ENCODE measurements at regions of chr10 and their contacts with region 1.

Region 1: GRCh38 chr10:24209946-24210491 is 1.1 kb downstream of the KIAA1217 start:
- DNase-seq: no peak
- ATAC-seq: no peak
- H3K4me3 ChIP-seq: no peak overlapping the region
- H3K4me3 Mint-ChIP-seq: peak overlapping the region in 1 of 3 donors; percentile 40
- H3K27ac ChIP-seq: no peak overlapping the region
- H3K27ac Mint-ChIP-seq: no peak overlapping the region
- H3K4me1 ChIP-seq: peaks cover 0 to 3% of the 10 kb centered on the region in 2 experiments
- H3K4me1 Mint-ChIP-seq: peaks cover 14 to 20% (median 15%) of the 10 kb centered on the region in 3 donors
- H3K27me3 ChIP-seq: peaks cover 0 to 22% of the 10 kb centered on the region in 2 experiments
- H3K27me3 Mint-ChIP-seq: peaks cover 33 to 48% of the 10 kb centered on the region in 2 donors

Region 2: GRCh38 chr10:24174014-24174413 is 36.0 kb before region 1 on chr10:
- CTCF ChIA-PET with region 1: interaction called in 1 of 2 experiments, 14 read pairs
- POLR2A ChIA-PET with region 1: no interaction called
- DNase-seq: no peak
- ATAC-seq: no peak
- H3K4me3 ChIP-seq: no peak overlapping the region
- H3K4me3 Mint-ChIP-seq: no peak overlapping the region
- H3K27ac ChIP-seq: no peak overlapping the region
- H3K27ac Mint-ChIP-seq: no peak overlapping the region
- H3K4me1 ChIP-seq: no peaks in the 10 kb centered on the region
- H3K4me1 Mint-ChIP-seq: no peaks in the 10 kb centered on the region
- H3K27me3 ChIP-seq: no peaks in the 10 kb centered on the region
- H3K27me3 Mint-ChIP-seq: no peaks in the 10 kb centered on the region

Region 3: DNA sequence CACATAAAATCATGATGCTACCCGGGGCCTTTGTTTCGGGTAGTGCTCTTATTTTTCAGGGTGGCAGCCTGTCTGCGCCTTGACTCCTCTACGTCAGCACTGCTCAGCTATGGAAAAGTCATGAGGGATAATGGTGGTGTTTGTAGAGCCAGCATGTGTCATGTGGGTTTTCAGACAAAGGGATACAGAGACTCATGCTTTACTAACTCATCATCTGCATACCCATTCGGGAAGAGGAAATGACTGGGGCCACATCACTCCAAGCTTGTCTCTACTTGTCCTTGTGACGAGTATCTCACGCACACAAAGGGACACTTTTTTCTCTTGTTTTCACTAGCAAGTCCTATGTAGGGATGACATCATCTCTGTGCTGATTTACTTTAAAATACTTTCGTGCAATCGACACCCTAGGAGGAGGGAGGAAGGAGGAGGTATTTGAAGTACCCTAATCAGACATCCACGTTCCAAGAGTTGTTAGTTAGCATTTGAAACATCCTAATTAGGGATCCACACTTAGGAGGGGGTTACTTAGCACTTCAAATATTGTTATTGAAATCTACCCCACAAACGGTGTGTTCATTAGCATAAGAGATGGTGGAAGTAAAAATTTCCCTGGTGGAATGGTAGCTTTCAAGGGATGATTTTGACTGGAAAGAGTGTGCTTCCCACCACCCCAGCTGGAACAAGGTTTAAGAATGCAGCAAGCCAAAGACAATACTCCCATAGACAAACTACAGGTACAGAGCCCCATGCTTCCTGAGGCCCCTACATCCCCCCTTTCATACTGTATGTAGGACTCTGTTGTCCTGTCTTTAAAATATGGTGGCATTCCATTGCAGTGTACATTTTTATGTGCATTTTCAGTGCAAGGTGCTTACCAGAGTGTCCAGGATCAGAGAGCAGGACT is 858.4 kb after region 1 on chr10:
- CTCF ChIA-PET with region 1: interaction called in 1 of 2 experiments, 12 read pairs
- POLR2A ChIA-PET with region 1: no interaction called
- DNase-seq: no peak
- ATAC-seq: no peak
- H3K4me3 ChIP-seq: no peak overlapping the region
- H3K4me3 Mint-ChIP-seq: no peak overlapping the region
- H3K27ac ChIP-seq: no peak overlapping the region
- H3K27ac Mint-ChIP-seq: no peak overlapping the region
- H3K4me1 ChIP-seq: peaks cover 0 to 1% of the 10 kb centered on the region in 2 experiments
- H3K4me1 Mint-ChIP-seq: peaks cover 0 to 7% (median 0%) of the 10 kb centered on the region in 3 donors
- H3K27me3 ChIP-seq: no peaks in the 10 kb centered on the region
- H3K27me3 Mint-ChIP-seq: peaks cover 2 to 8% of the 10 kb centered on the region in 2 donors

Measured in T-cell (primary cell).